ENCODE measurements at regions of chr20 and their contacts with region 1.

Region 1: GRCh38 chr20:46558511-46558959 is 8.1 kb upstream of the OCSTAMP start:
- DNase-seq: no peak
- ATAC-seq: peak in 3 of 4 donors; percentile 22 to 45 (median 29)
- H3K4me3 ChIP-seq: no peak overlapping the region
- H3K27ac ChIP-seq: no peak overlapping the region
- H3K4me1 ChIP-seq: no peaks in the 10 kb centered on the region
- H3K27me3 ChIP-seq: no peaks in the 10 kb centered on the region
- CTCF ChIP-seq: no peak

Region 2: GRCh38 chr20:46458866-46459750 is 99.4 kb before region 1 on chr20:
- intact Hi-C with region 1: no loop called
- DNase-seq: peak; percentile 72 to 93 (median 80)
- ATAC-seq: peak; percentile 95 to 99 (median 98)
- H3K4me3 ChIP-seq: peak overlapping the region; percentile 3 to 46 (median 22)
- H3K27ac ChIP-seq: no peak overlapping the region
- H3K4me1 ChIP-seq: no peaks in the 10 kb centered on the region
- H3K27me3 ChIP-seq: no peaks in the 10 kb centered on the region
- CTCF ChIP-seq: no peak

Region 3: DNA sequence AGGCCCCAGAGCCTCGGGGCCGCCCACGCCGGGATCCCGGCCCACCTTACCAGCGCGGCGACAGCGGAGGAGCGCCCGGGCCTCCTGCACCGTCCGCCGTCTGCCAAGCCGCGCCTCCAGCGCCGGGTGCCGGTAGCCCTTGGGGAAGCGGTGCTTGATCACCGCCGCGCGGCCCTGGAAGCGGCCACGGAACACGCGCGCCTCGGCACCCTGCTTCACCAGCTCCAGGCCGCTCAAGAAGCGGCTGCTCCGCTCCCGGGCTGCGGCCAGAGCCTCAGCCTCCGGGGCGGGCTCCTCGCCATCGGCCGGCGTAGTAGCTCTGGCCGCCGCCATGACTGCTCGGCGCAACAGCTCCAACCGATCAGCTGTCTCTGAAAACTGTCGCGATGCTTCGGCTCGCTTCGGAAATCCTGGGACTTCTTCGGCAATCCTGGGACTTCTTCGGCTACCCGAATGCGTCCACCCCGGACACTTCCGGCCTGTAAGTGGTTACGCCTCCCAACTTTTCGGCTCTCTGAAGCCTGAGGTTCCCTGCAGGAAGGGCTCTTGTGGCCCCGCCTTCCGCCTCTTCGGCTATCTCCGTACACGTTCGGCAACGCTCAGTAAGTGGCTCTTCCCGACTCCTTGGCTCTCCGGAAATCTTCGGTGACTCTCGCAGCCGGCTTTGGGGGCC is 130.7 kb after region 1 on chr20 and contains the start of gene TP53RK:
- intact Hi-C with region 1: loop called in 1 of 3 experiments (anchors 10 kb)
- DNase-seq: peak; percentile 87 to 99 (median 96)
- ATAC-seq: peak; percentile 94 to 98 (median 96)
- H3K4me3 ChIP-seq: peak within 1 kb of the TSS; percentile 65 to 95 (median 88)
- H3K27ac ChIP-seq: peak within 1 kb of the TSS; percentile 70 to 90 (median 86)
- H3K4me1 ChIP-seq: peaks cover 0 to 14% (median 3%) of the 10 kb centered on the region in 3 donors
- H3K27me3 ChIP-seq: no peaks in the 10 kb centered on the region
- CTCF ChIP-seq: peak in 1 of 4 donors; percentile 34
- total RNA-seq, gene TP53RK: 2.7 to 4.6 (median 3.8) TPM